ENCODE measurements at regions of chr17 and their contacts with region 1.

Region 1: DNA sequence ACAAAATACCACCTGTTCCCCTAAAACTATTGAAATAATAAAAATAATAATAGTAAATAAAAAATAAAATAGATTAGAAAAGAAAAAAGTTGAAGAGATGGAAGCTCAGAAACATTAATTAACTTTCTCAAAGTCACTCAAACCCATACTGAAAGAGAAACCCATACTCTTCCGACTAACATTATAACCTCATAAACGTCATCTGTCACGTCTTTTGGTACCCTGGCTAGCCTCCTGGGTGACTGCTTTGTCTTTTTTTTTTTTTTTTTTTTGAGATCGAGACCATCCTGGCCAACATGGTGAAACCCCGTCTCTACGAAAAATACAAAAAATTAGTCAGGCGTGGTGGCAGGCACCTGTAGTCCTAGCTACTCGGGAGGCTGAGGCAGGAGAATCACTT is 7.6 kb downstream of the SLFN12L start:
- DNase-seq: no peak
- ATAC-seq: no peak
- H3K4me3 ChIP-seq: no peak overlapping the region
- H3K27ac ChIP-seq: no peak overlapping the region
- H3K4me1 ChIP-seq: no peaks in the 10 kb centered on the region
- H3K27me3 ChIP-seq: no peaks in the 10 kb centered on the region
- CTCF ChIP-seq: no peak

Region 2: DNA sequence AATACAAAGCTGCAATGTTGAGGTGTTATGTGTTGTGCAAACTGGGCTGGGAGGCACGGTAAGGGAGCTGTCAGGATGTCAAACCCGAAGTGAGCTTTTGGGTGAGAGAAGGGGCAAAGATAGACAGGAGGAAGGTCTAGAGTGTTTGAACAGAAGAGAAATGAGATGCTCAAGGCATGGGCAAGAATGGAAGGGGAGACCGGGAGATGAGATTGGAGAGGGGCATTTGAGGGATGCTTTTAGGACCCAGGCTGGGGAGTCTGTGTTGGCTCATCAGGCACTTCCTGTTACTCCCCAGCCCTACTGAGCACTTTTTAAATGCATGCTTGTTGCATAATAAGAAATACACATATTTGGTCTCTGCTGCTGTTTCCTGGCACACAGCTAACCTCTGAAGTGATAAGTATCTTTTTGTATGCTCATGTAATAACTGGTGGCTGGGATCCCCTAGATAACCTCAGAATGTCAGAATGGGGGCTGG is 368.5 kb before region 1 on chr17:
- intact Hi-C with region 1: no loop called
- DNase-seq: no peak
- ATAC-seq: peak; percentile 56
- H3K4me3 ChIP-seq: no peak overlapping the region
- H3K27ac ChIP-seq: no peak overlapping the region
- H3K4me1 ChIP-seq: no peaks in the 10 kb centered on the region
- H3K27me3 ChIP-seq: no peaks in the 10 kb centered on the region
- CTCF ChIP-seq: no peak

Region 3: GRCh38 chr17:35312790-35313711 is 216.8 kb before region 1 on chr17:
- intact Hi-C with region 1: loop called (anchors 5 kb)
- DNase-seq: peak; percentile 63
- ATAC-seq: peak; percentile 94
- H3K4me3 ChIP-seq: peak overlapping the region; percentile 41
- H3K27ac ChIP-seq: peak overlapping the region; percentile 69
- H3K4me1 ChIP-seq: peaks cover 37% of the 10 kb centered on the region
- H3K27me3 ChIP-seq: no peaks in the 10 kb centered on the region
- CTCF ChIP-seq: peak; percentile 80

Region 4: DNA sequence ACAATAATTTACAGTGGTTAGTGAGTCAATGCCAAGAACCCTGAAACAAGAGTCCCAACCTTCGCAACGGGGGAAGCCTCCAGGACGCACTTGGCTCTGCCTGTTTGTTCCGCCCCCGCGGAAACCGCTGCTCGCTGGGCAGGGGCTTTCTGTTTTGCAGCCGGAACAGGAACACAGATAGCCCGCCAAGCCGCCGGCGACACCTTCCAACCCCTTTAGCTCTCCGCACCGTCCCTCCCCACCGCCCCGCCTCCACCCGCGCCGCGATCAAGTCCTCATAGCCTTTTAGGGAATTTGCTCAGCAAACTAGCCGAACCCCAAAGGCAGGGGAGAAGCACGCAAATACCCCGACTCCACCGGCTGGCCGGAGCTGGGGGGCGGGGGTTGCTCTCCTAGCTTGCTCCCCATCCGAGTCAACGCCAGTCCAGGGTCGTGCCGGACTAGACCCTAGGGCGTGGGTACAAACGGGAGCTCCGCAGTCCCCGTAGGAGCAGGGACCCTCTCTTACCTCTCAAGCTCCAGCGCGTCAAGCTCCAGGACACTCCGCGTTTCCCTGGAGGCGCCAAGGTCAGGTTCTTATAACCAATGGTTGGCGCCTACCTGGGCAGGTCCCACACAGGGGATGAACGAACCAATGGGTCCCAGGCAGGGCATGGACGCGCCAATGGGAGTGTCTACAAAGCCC is 81.5 kb before region 1 on chr17 and contains the start of gene SLFN13:
- intact Hi-C with region 1: no loop called
- DNase-seq: peak; percentile 89
- ATAC-seq: peak; percentile 95
- H3K4me3 ChIP-seq: peak within 1 kb of the TSS; percentile 62
- H3K27ac ChIP-seq: peak within 1 kb of the TSS; percentile 61
- H3K4me1 ChIP-seq: peaks cover 9% of the 10 kb centered on the region
- H3K27me3 ChIP-seq: no peaks in the 10 kb centered on the region
- CTCF ChIP-seq: no peak
- total RNA-seq, gene SLFN13: 25.7 TPM

Measured in upper lobe of right lung (tissue), 1 donor.